ENCODE measurements at regions of chr6 and their contacts with region 1.

Region 1: DNA sequence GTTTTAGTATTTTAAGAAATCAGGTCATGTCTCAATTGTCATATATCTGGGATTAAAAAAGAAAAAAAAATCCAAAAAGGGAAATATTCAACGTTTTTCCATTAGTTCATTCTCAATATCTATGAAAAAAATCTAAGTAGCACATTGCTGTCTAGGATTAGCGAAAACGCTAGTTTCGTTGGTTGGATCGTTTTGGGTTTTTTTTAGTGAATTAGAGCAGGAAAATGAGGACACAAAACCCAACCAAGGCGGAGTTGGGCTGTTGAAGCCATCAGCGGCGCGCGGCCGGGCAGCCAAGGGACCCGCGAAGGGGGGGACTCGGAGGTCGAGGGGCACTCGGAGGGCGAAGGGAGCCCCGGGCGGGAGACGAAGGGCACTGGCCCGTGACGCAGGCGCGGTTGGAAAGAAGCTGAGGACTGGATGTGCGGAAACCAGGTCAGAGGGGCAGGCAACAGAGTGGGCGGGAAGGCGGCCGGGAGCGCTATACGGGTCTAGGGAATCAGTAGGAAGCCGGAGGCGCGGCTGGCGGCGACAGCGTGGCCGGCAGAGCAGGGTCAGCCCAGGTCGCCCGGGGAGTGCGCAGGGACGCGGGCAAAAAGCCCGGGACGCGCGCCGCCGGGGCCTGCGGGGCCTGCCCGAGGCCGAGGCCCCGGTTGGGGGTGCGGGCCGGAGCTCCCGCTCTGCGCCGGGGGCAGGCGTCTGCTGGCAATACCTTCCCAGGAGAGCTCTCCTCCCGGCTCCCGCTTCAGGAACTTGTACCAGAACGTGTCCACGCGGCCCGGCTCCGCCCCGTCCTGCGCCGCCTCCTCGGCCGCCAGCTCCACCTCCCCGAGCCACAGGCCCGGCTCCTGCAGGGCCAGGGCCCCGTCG is 599 bp downstream of the EPM2A start:
- DNase-seq: peak; percentile 90
- H3K4me3 Mint-ChIP-seq: peak overlapping the region; percentile 99
- H3K27ac Mint-ChIP-seq: peak overlapping the region; percentile 90
- H3K4me1 Mint-ChIP-seq: no peaks in the 10 kb centered on the region
- H3K27me3 Mint-ChIP-seq: no peaks in the 10 kb centered on the region
- CTCF ChIP-seq: no peak

Region 2: GRCh38 chr6:145306489-145306888 is 428.2 kb before region 1 on chr6:
- CTCF ChIA-PET with region 1: no interaction called
- POLR2A ChIA-PET with region 1: no interaction called
- intact Hi-C with region 1: no loop called
- DNase-seq: no peak
- H3K4me3 Mint-ChIP-seq: no peak overlapping the region
- H3K27ac Mint-ChIP-seq: no peak overlapping the region
- H3K4me1 Mint-ChIP-seq: no peaks in the 10 kb centered on the region
- H3K27me3 Mint-ChIP-seq: no peaks in the 10 kb centered on the region
- CTCF ChIP-seq: no peak

Region 3: DNA sequence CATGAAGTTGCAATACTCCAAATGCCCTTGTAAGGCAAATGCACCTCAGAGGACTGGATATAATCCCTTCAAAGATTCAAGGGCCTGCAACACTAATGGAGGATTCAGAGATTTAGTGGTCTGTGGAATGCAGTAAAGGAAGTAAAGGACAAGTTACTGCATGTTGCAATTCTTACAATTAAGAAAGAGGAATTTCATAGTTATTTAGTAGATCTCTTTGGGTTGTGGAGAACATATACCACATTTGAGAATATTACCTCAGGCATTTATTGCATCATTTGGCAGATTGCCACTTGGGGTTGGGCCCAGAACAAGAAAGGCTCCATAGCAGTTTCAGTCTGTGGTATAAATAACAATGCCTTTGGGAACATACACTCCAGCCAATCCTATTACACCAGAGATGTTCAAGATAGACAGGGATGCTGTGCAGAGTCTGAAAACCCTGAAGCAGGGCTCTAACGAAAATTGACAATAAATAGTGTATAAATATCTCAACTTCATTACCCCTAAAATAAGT is 21.5 kb after region 1 on chr6:
- CTCF ChIA-PET with region 1: interaction called, 4 read pairs
- POLR2A ChIA-PET with region 1: interaction called, 16 read pairs
- intact Hi-C with region 1: no loop called
- DNase-seq: peak; percentile 96
- H3K4me3 Mint-ChIP-seq: no peak overlapping the region
- H3K27ac Mint-ChIP-seq: peak overlapping the region; percentile 25
- H3K4me1 Mint-ChIP-seq: peaks cover 18% of the 10 kb centered on the region
- H3K27me3 Mint-ChIP-seq: no peaks in the 10 kb centered on the region
- CTCF ChIP-seq: no peak

Region 4: GRCh38 chr6:145809211-145809610 is 74.5 kb after region 1 on chr6:
- CTCF ChIA-PET with region 1: interaction called, 24 read pairs
- POLR2A ChIA-PET with region 1: interaction called, 158 read pairs
- intact Hi-C with region 1: loop called (anchors 1 kb)
- DNase-seq: no peak
- H3K4me3 Mint-ChIP-seq: no peak overlapping the region
- H3K27ac Mint-ChIP-seq: peak overlapping the region; percentile 53
- H3K4me1 Mint-ChIP-seq: peaks cover 33% of the 10 kb centered on the region
- H3K27me3 Mint-ChIP-seq: no peaks in the 10 kb centered on the region
- CTCF ChIP-seq: no peak

Region 5: GRCh38 chr6:145887969-145888368 is 153.2 kb after region 1 on chr6:
- CTCF ChIA-PET with region 1: no interaction called
- POLR2A ChIA-PET with region 1: interaction called, 3 read pairs
- intact Hi-C with region 1: loop called (anchors 2 kb)
- DNase-seq: peak; percentile 10
- H3K4me3 Mint-ChIP-seq: no peak overlapping the region
- H3K27ac Mint-ChIP-seq: no peak overlapping the region
- H3K4me1 Mint-ChIP-seq: no peaks in the 10 kb centered on the region
- H3K27me3 Mint-ChIP-seq: no peaks in the 10 kb centered on the region
- CTCF ChIP-seq: peak; percentile 28

Region 6: GRCh38 chr6:146153040-146153758 is 418.5 kb after region 1 on chr6:
- CTCF ChIA-PET with region 1: no interaction called
- POLR2A ChIA-PET with region 1: no interaction called
- intact Hi-C with region 1: no loop called
- DNase-seq: no peak
- H3K4me3 Mint-ChIP-seq: no peak overlapping the region
- H3K27ac Mint-ChIP-seq: no peak overlapping the region
- H3K4me1 Mint-ChIP-seq: no peaks in the 10 kb centered on the region
- H3K27me3 Mint-ChIP-seq: peaks cover 41% of the 10 kb centered on the region
- CTCF ChIP-seq: no peak

Region 7: DNA sequence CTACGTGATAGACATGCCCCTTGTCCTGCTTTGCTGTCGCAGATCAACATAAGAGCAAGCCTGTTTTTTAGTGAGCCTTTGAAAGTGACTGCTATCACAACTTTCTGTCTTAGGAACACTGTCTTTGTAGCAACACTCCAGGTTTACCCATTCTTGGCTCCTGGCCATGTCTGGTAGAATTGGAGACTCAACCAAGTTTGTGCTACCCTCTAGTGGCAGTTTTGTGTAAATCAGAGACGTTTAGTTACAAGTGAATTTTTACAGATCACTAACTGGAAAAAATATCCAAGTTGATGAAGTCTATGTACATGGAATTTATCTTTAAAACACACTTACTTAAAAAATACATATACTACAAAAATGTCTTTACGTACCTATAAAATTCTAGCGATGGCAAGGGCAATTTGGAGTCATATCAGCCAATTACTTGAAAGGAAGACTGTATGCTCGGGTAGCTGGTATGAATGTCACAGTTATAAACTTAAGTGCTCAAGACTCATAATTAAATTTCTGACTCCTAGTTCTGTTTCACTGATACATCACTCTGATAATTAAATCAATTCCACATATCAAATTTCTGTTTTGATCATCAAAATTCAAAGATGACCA is 965.5 kb after region 1 on chr6:
- CTCF ChIA-PET with region 1: no interaction called
- POLR2A ChIA-PET with region 1: interaction called, 3 read pairs
- intact Hi-C with region 1: loop called (anchors 10 kb)
- DNase-seq: peak; percentile 94
- H3K4me3 Mint-ChIP-seq: no peak overlapping the region
- H3K27ac Mint-ChIP-seq: no peak overlapping the region
- H3K4me1 Mint-ChIP-seq: no peaks in the 10 kb centered on the region
- H3K27me3 Mint-ChIP-seq: peaks cover 29% of the 10 kb centered on the region
- CTCF ChIP-seq: peak; percentile 67

Measured in MCF 10A (cell line).